AG04450 (cell line): ENCODE measurements at regions of chr1 and their contacts with region 1.

Region 1: DNA sequence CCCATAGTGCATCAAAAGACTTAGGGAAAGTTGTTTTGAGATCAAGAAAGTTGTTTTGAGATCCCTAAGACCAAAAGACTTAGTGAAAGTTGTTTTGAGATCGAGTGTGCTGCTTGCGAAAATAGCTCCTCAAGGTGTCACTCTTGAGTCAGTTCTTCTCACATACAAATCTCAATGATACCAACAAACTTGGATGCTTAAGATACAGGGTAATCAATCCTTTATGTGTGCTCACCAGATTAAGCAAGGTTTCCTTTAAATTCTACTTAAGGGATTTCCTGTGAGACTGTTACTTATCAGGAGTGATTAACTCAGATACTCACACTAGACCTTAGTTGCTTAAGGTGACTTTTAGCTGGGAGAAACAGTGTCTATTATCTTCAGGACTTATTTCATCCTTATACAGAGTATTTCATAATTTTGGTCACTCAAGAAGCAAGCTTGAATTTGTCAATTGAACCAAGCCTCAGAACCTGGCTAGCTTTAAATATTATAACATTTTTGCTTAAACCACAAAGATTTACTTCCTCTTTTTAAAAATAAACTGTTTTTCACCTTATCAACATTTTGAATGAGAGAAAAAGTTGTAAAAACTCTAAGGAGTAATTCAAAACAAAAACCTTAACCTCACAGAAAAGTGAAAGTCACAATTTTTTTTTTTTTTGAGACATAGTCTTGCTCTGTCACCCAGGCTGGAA is 8.0 kb upstream of the RLF start:
- DNase-seq: peak; percentile 23
- H3K4me3 ChIP-seq: no peak overlapping the region
- H3K27ac ChIP-seq: no peak overlapping the region
- H3K27me3 ChIP-seq: peaks cover 2% of the 10 kb centered on the region
- CTCF ChIP-seq: peak; percentile 80

Region 2: GRCh38 chr1:39901698-39902459 is 251.3 kb before region 1 on chr1 and contains the start of gene MYCL:
- CTCF ChIA-PET with region 1: no interaction called
- POLR2A ChIA-PET with region 1: no interaction called
- DNase-seq: no peak
- H3K4me3 ChIP-seq: peak within 1 kb of the TSS; percentile 66
- H3K27ac ChIP-seq: no peak within 1 kb of the TSS
- H3K27me3 ChIP-seq: peaks cover 21% of the 10 kb centered on the region
- CTCF ChIP-seq: peak; percentile 63
- polyA plus RNA-seq, gene MYCL: 0.66 and 0.77 TPM in 2 replicates

Region 3: DNA sequence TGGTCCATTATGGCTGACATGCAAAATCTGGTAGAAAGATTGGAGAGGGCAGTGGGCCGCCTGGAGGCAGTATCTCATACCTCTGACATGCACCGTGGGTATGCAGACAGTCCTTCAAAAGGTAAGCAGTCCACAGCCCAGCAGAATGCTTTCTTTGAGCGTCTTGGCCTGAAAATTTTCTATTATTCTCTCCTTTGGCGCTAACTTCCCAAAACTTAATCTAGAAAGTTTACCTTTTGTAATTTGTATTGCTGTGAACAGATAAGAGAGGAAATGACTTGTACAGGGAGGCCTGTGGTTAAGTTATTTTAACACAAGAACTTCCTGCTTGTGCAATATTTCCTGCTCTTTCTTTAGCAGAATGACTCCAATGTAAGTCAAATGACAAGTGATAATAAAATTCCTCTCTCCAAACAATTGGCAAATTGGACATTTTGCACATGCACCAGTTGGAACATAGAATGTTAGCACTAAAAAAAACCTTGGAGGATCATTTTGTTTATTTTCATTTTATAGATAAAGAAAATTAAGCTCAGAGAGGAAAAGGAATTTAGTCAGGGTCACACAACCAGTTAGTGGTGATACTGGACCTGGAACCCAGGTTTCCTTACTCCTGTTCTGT is 93.8 kb before region 1 on chr1:
- CTCF ChIA-PET with region 1: interaction called, 11 read pairs
- POLR2A ChIA-PET with region 1: no interaction called
- DNase-seq: no peak
- H3K4me3 ChIP-seq: no peak overlapping the region
- H3K27ac ChIP-seq: no peak overlapping the region
- H3K27me3 ChIP-seq: no peaks in the 10 kb centered on the region
- CTCF ChIP-seq: no peak

Region 4: DNA sequence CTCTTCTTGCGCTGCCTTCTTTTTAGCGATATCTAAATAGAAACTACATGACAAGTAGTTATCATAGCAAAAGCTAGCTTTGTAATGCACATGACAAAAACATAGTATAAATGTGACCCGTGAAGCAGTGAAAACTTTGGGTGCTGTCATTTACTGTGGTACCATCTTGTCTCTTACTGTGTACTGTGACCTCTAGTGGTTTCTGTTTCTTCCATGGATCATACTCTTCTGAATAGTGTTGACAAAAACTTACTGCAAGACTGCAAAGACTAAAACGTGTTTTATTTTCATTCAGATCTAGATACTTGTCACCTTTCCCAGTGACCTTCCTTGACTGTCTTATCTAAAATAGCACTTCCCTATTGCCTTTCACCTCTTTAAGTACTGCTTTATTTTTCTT is 14.1 kb after region 1 on chr1:
- CTCF ChIA-PET with region 1: interaction called, 23 read pairs
- POLR2A ChIA-PET with region 1: no interaction called
- DNase-seq: no peak
- H3K4me3 ChIP-seq: no peak overlapping the region
- H3K27ac ChIP-seq: no peak overlapping the region
- H3K27me3 ChIP-seq: no peaks in the 10 kb centered on the region
- CTCF ChIP-seq: no peak

Region 5: GRCh38 chr1:40183055-40183710 is 30.0 kb after region 1 on chr1:
- CTCF ChIA-PET with region 1: interaction called, 18 read pairs
- POLR2A ChIA-PET with region 1: no interaction called
- DNase-seq: no peak
- H3K4me3 ChIP-seq: no peak overlapping the region
- H3K27ac ChIP-seq: no peak overlapping the region
- H3K27me3 ChIP-seq: no peaks in the 10 kb centered on the region
- CTCF ChIP-seq: peak; percentile 52

Region 6: DNA sequence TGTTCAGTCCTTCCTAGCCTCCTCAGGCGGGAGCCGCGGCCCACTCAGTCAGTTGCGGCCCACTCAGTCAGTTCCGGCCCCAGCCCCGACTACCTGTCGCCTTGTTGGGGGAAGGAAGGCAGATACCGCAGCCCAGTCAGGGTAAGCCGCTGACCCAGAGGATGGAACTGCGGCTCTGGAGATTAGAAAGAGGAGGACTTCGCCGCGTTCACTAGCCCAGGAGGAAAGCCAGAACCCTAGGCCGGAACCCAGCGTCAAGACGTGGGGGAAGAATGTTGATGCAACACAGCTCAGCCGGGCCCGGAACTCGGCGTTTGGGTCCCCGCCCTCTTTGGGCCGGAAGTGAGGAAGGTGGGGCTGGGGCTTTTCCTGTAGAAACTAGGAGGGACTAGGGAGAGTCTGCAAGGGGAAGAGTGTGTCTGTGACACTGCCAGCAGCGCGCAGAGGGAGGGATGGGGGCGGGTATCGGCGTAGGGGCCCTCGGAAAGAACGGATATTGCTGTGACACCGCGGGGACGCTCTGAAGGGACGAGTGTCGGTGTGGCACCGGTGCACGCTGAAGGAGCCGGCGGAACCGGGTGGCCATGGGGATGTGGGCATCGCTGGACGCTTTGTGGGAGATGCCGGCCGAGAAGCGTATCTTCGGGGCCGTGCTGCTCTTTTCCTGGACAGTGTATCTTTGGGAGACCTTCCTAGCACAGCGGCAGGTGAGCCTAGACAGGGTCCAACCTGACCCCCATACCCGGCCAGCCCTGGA is 104.6 kb after region 1 on chr1 and contains the start of gene ZMPSTE24:
- CTCF ChIA-PET with region 1: interaction called, 10 read pairs
- POLR2A ChIA-PET with region 1: no interaction called
- DNase-seq: peak; percentile 92
- H3K4me3 ChIP-seq: peak within 1 kb of the TSS; percentile 99
- H3K27ac ChIP-seq: peak within 1 kb of the TSS; percentile 99
- H3K27me3 ChIP-seq: no peaks in the 10 kb centered on the region
- CTCF ChIP-seq: no peak
- polyA plus RNA-seq, gene ZMPSTE24: 40.1 and 55.8 TPM in 2 replicates

Region 7: DNA sequence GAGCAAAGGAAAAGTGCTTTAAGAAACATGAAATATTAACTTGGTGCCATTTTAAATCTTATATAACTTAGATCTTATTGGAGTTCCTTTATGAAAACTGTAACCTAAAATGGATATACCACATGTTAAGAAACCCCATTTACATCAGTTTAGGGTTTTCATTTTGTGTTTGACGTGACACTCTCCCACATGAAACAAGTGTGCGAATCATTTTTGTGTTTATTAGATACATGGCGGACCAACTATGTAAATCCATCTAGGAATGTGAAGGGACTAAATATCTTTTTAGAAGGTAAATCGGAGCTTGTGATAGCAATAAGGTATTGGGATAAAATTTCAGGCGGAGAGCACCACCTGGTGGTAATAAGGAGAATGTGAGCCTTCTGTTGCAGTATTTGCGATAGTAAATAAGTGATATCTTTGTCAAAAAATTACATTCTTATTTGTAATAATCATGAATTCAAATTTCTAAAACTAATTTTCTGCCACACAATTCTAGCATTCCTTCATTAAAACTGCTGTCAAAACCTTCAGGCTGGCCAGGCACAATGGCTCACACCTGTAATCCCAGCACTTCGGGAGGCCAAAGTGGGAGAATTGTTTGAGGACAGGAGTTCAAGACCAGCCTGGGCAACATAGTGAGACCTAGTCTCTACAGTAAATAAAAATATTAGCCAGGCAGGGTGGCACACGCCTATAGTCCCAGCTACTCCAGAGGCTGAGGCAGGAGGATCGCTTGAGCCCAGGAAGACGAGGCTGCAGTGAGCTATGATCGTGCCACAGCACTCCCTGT is 251.6 kb after region 1 on chr1:
- CTCF ChIA-PET with region 1: interaction called, 49 read pairs
- POLR2A ChIA-PET with region 1: no interaction called
- DNase-seq: no peak
- H3K4me3 ChIP-seq: no peak overlapping the region
- H3K27ac ChIP-seq: no peak overlapping the region
- H3K27me3 ChIP-seq: no peaks in the 10 kb centered on the region
- CTCF ChIP-seq: peak; percentile 77

Region 8: GRCh38 chr1:40438391-40439015 is 285.3 kb after region 1 on chr1:
- CTCF ChIA-PET with region 1: interaction called, 20 read pairs
- POLR2A ChIA-PET with region 1: no interaction called
- DNase-seq: no peak
- H3K4me3 ChIP-seq: no peak overlapping the region
- H3K27ac ChIP-seq: no peak overlapping the region
- H3K27me3 ChIP-seq: no peaks in the 10 kb centered on the region
- CTCF ChIP-seq: peak; percentile 56